Right cardiac atrium (tissue), 5 donors: ENCODE measurements at regions of chr2 and their contacts with region 1.

Region 1: DNA sequence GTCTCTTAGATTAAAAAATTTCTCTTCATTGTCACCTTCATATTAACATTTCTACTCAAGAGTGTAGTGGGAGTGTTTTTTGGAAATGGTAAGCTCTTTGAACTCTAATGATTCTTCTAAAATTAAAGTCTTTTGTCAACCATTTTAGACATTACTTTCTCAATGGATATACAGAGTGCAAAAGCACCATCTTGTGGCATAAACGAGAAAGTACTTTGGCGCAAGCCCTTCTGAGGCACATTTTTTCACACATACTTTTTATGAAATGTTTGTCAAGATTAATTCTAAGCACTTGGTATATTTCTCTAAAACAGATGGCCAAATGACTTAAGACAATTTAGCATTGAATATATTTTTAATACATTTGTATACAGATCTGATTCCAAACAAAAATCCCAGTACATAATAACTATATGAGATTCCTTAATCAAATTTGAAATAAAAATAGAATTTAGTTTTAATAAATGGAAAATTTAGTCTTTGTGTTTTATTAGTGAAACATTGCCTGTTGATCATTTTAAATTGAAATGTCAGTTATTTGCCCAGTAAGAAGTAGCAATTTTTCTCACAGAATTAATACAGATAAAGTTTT is 63.3 kb upstream of the GALNT5 start:
- DNase-seq: no peak
- ATAC-seq: no peak
- H3K4me3 ChIP-seq: no peak overlapping the region
- H3K27ac ChIP-seq: no peak overlapping the region
- H3K4me1 ChIP-seq: no peaks in the 10 kb centered on the region
- H3K27me3 ChIP-seq: no peaks in the 10 kb centered on the region

Region 2: GRCh38 chr2:155368934-155369333 is 1825.3 kb before region 1 on chr2:
- intact Hi-C with region 1: loop called in 2 of 4 experiments (anchors 10 kb)
- DNase-seq: no peak
- ATAC-seq: no peak
- H3K4me3 ChIP-seq: no peak overlapping the region
- H3K27ac ChIP-seq: no peak overlapping the region
- H3K4me1 ChIP-seq: no peaks in the 10 kb centered on the region
- H3K27me3 ChIP-seq: no peaks in the 10 kb centered on the region

Region 3: DNA sequence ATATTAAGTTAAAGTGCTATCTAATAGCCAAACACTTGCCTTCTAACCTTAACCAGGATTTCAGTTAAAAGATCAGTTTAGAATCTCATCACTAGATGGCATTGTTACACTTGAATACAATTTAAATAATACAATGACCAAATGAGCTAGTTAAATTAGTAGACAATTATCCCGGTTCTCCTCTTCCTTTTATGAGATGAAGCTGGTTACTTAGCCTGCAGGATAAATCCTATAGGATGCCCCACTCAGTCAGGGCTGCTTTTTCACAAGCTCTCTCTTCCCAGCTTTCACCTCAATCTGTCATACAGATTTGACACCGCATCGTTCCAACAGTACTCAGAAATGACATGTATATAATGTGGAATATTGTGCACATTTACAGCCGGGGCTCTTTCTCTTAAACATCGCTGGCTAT is 1816.9 kb before region 1 on chr2:
- intact Hi-C with region 1: loop called in 1 of 4 experiments (anchors 10 kb)
- DNase-seq: no peak
- ATAC-seq: no peak
- H3K4me3 ChIP-seq: no peak overlapping the region
- H3K27ac ChIP-seq: no peak overlapping the region
- H3K4me1 ChIP-seq: no peaks in the 10 kb centered on the region
- H3K27me3 ChIP-seq: no peaks in the 10 kb centered on the region

Region 4: DNA sequence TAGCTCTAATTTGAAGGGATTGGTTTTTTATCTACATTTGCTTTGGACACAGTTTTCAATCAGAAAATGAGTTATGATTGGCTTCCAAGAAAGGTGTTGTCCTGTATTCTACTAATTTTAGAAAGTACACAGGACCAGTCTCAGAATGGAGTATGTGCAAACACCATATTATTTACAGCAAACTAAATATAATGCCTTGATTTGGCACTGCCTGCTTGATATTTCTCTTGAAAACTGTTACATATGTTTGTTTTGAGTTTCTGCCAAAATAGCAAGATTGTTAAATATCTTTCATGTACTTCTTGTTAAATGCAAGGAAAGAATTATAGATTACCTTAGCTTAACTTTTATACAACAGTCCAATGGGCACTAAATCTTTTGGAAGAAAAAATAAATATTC is 1800.8 kb before region 1 on chr2:
- intact Hi-C with region 1: loop called in 1 of 4 experiments (anchors 10 kb)
- DNase-seq: no peak
- ATAC-seq: no peak
- H3K4me3 ChIP-seq: no peak overlapping the region
- H3K27ac ChIP-seq: no peak overlapping the region
- H3K4me1 ChIP-seq: no peaks in the 10 kb centered on the region
- H3K27me3 ChIP-seq: no peaks in the 10 kb centered on the region

Region 5: DNA sequence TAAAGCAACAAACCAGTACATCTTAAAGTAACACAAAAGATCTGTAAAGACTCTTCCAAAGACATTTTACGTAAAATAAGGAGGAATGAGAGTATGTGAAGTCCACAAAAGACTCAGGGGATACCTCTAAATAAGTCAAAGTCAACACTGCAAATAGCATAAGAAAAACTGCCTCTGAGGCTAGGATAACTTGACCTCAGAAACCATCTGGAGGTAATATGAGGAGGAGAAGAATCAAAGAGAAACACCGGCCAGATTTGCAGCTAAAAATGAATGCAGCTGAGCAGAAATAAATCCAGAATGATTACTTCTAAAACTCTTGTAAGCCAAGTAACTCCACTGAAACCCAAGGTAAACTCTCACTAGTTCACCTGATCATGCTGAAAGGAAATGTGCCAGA is 183.7 kb after region 1 on chr2:
- intact Hi-C with region 1: no loop called
- DNase-seq: no peak
- ATAC-seq: no peak
- H3K4me3 ChIP-seq: no peak overlapping the region
- H3K27ac ChIP-seq: no peak overlapping the region
- H3K4me1 ChIP-seq: no peaks in the 10 kb centered on the region
- H3K27me3 ChIP-seq: no peaks in the 10 kb centered on the region

Region 6: GRCh38 chr2:157480182-157480961 is 286.2 kb after region 1 on chr2:
- intact Hi-C with region 1: no loop called
- DNase-seq: peak; percentile 87 to 93 (median 88)
- ATAC-seq: peak; percentile 98
- H3K4me3 ChIP-seq: no peak overlapping the region
- H3K27ac ChIP-seq: peak overlapping the region; percentile 87
- H3K4me1 ChIP-seq: peaks cover 10% of the 10 kb centered on the region
- H3K27me3 ChIP-seq: no peaks in the 10 kb centered on the region